IMR-90 (cell line): ENCODE measurements at regions of chr7 and their contacts with region 1.

Region 1: DNA sequence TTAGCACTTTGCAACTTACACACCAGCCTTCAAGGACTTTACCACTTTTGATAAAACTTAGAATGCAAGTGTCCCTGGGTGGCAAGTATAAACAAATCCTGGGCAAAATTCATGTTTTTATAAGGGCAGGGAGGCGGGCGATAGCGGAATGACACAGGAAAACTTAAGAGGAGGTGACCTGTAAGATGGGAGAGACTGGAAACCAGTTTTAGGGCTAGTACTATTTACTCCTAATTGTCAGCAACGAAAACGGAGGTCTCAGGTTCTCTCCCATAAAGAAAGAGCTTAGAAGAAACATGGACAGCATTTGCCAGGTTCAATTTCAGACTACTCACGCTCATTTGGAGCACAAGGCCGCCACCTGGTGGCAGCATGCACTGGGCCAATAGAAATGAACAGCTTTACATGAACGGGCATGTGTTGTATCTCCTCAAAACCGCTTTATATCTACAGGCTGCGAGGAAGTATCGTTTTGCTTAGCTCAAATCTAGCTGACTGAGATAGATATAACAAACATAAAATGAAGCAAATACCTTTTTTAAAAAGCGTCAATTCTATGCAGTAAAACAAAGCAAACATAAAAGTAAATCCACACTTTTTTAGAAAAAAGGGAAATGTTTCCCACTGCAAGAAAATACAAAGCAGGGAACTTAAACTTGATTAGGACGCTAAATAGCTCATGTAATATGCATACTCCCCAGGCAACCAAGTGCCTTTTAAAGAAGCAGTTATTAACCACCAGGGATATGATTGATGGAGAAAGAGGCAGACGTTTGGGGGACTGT is 37.6 kb upstream of the SVOPL start:
- DNase-seq: peak; percentile 84
- ATAC-seq: peak; percentile 98
- H3K4me3 ChIP-seq: no peak overlapping the region
- H3K27ac ChIP-seq: no peak overlapping the region
- H3K4me1 ChIP-seq: no peaks in the 10 kb centered on the region
- H3K27me3 ChIP-seq: no peaks in the 10 kb centered on the region; the same call in 1 of the 2 replicates
- CTCF ChIP-seq: peak; percentile 96
- POLR2A ChIP-seq: no peak
- RAD21 ChIP-seq: peak; percentile 95

Region 2: GRCh38 chr7:137898839-137899721 is 839.7 kb before region 1 on chr7:
- CTCF ChIA-PET with region 1: no interaction called
- POLR2A ChIA-PET with region 1: no interaction called
- dilution Hi-C with region 1: no loop called
- in situ Hi-C with region 1: loop called (anchors 10 kb)
- intact Hi-C with region 1: loop called (anchors 2 kb)
- DNase-seq: peak; percentile 66
- ATAC-seq: peak; percentile 94
- H3K4me3 ChIP-seq: no peak overlapping the region
- H3K27ac ChIP-seq: no peak overlapping the region
- H3K4me1 ChIP-seq: no peaks in the 10 kb centered on the region
- H3K27me3 ChIP-seq: no peaks in the 10 kb centered on the region
- CTCF ChIP-seq: peak; percentile 90
- POLR2A ChIP-seq: no peak
- RAD21 ChIP-seq: peak; percentile 97

Region 3: GRCh38 chr7:138008547-138009349 is 730.0 kb before region 1 on chr7:
- CTCF ChIA-PET with region 1: no interaction called
- POLR2A ChIA-PET with region 1: no interaction called
- dilution Hi-C with region 1: no loop called
- in situ Hi-C with region 1: no loop called
- intact Hi-C with region 1: loop called (anchors 2 kb)
- DNase-seq: peak; percentile 68
- ATAC-seq: peak; percentile 87
- H3K4me3 ChIP-seq: no peak overlapping the region
- H3K27ac ChIP-seq: no peak overlapping the region; the same call in 1 of the 2 replicates
- H3K4me1 ChIP-seq: peaks cover 5% of the 10 kb centered on the region; the same call in 1 of the 2 replicates
- H3K27me3 ChIP-seq: peaks cover 5% of the 10 kb centered on the region; the same call in 1 of the 2 replicates
- CTCF ChIP-seq: peak; percentile 94
- POLR2A ChIP-seq: no peak
- RAD21 ChIP-seq: peak; percentile 90

Region 4: DNA sequence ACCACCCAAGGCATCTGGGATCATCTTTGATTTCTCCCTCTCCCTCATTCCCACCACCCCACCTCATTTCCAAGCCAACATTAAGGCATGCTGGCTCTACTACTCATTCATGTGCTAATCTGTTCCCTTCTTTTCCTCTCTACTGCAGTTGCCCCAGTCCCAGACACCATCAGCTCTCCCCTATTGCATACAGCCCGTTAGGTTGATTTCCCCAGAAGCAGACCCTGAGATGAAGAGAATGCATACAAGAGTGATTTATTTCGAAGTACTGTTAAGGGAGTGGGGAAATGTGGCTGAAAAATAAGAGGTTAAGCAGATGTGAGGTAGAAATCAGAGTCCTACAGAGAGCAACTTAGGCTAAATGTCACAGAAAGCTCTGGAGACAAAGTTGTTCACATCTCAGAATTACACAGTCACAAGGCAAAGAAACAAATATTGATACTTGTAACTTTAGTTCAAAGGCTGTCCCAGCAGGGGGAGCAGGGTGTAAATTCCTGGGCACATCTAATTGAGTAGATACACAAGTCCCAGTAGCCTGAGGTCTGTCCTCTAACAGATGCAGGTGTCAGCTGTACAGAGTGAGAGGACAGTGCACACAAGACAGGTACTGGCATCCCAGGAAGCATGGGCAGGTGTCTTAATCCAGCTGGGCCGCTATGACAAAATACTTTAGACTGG is 641.5 kb before region 1 on chr7:
- CTCF ChIA-PET with region 1: no interaction called
- POLR2A ChIA-PET with region 1: no interaction called
- dilution Hi-C with region 1: no loop called
- in situ Hi-C with region 1: no loop called
- intact Hi-C with region 1: loop called (anchors 5 kb)
- DNase-seq: no peak
- ATAC-seq: no peak; the same call in 1 of the 2 replicates
- H3K4me3 ChIP-seq: no peak overlapping the region
- H3K27ac ChIP-seq: no peak overlapping the region
- H3K4me1 ChIP-seq: no peaks in the 10 kb centered on the region
- H3K27me3 ChIP-seq: no peaks in the 10 kb centered on the region
- CTCF ChIP-seq: 0 out of 2 replicates have a peak, but pooled peaks have one; percentile 16
- POLR2A ChIP-seq: no peak
- RAD21 ChIP-seq: no peak

Region 5: GRCh38 chr7:138449580-138449979 is 289.2 kb before region 1 on chr7:
- CTCF ChIA-PET with region 1: no interaction called
- POLR2A ChIA-PET with region 1: no interaction called
- dilution Hi-C with region 1: no loop called
- in situ Hi-C with region 1: no loop called
- intact Hi-C with region 1: loop called (anchors 1 kb)
- DNase-seq: no peak
- ATAC-seq: no peak
- H3K4me3 ChIP-seq: no peak overlapping the region
- H3K27ac ChIP-seq: no peak overlapping the region
- H3K4me1 ChIP-seq: no peaks in the 10 kb centered on the region
- H3K27me3 ChIP-seq: no peaks in the 10 kb centered on the region
- CTCF ChIP-seq: 0 out of 2 replicates have a peak, but pooled peaks have one; percentile 13
- POLR2A ChIP-seq: no peak
- RAD21 ChIP-seq: peak; percentile 17; the same call in 1 of the 2 replicates

Region 6: GRCh38 chr7:138981332-138982203 is 242.8 kb after region 1 on chr7 and contains the start of gene KIAA1549:
- CTCF ChIA-PET with region 1: no interaction called
- POLR2A ChIA-PET with region 1: no interaction called
- dilution Hi-C with region 1: no loop called
- in situ Hi-C with region 1: no loop called
- intact Hi-C with region 1: loop called (anchors 2 kb)
- DNase-seq: peak; percentile 64
- ATAC-seq: peak; percentile 95
- H3K4me3 ChIP-seq: peak within 1 kb of the TSS; percentile 73
- H3K27ac ChIP-seq: no peak within 1 kb of the TSS; the same call in 1 of the 2 replicates
- H3K4me1 ChIP-seq: peaks cover 3% of the 10 kb centered on the region; the same call in 1 of the 2 replicates
- H3K27me3 ChIP-seq: peaks cover 2% of the 10 kb centered on the region; the same call in 1 of the 2 replicates
- CTCF ChIP-seq: peak; percentile 58
- POLR2A ChIP-seq: no peak
- RAD21 ChIP-seq: peak; percentile 48
- total RNA-seq, gene KIAA1549: 1.1 and 1.3 TPM in 2 replicates

Region 7: GRCh38 chr7:139127648-139128047 is 388.9 kb after region 1 on chr7:
- CTCF ChIA-PET with region 1: no interaction called
- POLR2A ChIA-PET with region 1: no interaction called
- dilution Hi-C with region 1: no loop called
- in situ Hi-C with region 1: no loop called
- intact Hi-C with region 1: loop called (anchors 5 kb)
- DNase-seq: peak; percentile 48
- ATAC-seq: peak; percentile 74; the same call in 1 of the 2 replicates
- H3K4me3 ChIP-seq: no peak overlapping the region
- H3K27ac ChIP-seq: no peak overlapping the region
- H3K4me1 ChIP-seq: no peaks in the 10 kb centered on the region
- H3K27me3 ChIP-seq: peaks cover 18% of the 10 kb centered on the region
- CTCF ChIP-seq: peak; percentile 49
- POLR2A ChIP-seq: no peak
- RAD21 ChIP-seq: peak; percentile 55